Activated CD4-positive, alpha-beta T cell treated with anti-CD3 and anti-CD28 coated beads for 36 hours (primary cell): ENCODE measurements at regions of chr6 and their contacts with region 1.

Region 1: GRCh38 chr6:37653933-37654565 is 43.6 kb downstream of the MDGA1 start:
- DNase-seq: peak; percentile 77
- ATAC-seq: peak; percentile 71
- H3K4me3 Mint-ChIP-seq: no peak overlapping the region
- H3K27ac Mint-ChIP-seq: no peak overlapping the region
- H3K4me1 Mint-ChIP-seq: peaks cover 11% of the 10 kb centered on the region
- H3K27me3 Mint-ChIP-seq: peaks cover 13% of the 10 kb centered on the region

Region 2: DNA sequence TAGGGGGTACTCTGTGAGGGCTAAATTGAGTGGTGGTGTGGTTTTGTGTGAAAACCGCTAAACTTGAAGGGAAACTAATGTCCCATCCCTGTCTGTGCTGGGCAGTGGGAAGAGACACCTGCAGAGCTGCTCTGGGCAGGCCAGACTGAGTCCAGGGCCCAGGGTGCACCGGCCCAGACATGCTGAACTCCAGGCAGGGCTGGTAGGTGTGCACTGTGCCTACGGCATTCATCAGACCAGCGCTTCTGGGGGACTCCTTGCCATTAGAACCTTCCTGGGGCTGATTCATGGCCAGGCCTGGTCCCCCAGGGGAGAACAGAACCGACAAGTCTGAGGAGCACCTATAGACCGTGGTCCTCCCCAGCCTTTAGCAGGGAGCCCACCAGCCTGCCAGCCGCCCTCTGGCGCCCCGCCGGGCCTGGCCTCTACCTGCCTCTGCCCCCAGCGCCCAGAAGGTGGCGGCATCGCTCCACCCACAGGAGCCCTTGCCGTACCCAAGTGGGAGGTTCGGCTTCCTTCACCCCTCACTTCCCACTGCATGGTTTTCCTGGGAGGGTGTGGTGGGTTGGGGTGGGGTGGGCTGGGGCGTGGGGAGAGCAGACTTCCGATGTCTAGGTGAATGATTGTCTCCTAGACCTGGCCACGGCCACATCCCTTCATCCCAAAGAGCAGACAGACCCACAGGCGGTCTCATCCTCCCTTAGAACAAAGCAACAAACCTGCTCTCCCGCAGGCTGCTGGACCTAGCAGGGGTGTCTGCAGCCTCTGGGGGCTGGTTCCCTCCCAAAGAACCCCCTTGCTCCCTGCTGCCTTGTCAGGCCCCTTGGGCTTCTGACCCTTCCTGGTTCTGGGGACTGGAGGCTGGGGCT is 169.9 kb before region 1 on chr6:
- CTCF ChIA-PET with region 1: interaction called, 11 read pairs
- POLR2A ChIA-PET with region 1: no interaction called
- intact Hi-C with region 1: loop called in 1 of 2 experiments (anchors 1 kb)
- DNase-seq: peak; percentile 86
- ATAC-seq: peak; percentile 61
- H3K4me3 Mint-ChIP-seq: no peak overlapping the region
- H3K27ac Mint-ChIP-seq: no peak overlapping the region
- H3K4me1 Mint-ChIP-seq: peaks cover 15% of the 10 kb centered on the region
- H3K27me3 Mint-ChIP-seq: no peaks in the 10 kb centered on the region

Region 3: DNA sequence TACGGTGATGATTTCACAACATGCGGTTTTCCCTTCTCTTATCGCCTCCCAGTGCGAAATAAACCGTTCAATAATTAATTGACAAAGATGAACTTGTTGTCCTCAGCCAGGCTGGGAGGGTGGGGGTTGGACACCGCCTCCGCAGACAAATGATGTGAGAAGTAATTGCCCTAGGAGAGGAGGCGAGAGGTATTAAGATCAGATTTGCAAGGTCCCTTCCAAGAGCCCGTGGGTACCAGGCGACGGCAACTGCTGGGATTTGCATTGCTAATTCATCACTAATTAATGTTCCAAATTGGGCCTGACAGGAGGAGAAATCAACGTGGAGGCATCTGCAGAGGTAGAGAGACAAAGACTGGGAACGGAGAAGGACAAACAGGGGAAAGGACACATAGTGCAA is 64.1 kb before region 1 on chr6:
- CTCF ChIA-PET with region 1: no interaction called
- POLR2A ChIA-PET with region 1: no interaction called
- intact Hi-C with region 1: no loop called
- DNase-seq: no peak
- ATAC-seq: no peak
- H3K4me3 Mint-ChIP-seq: no peak overlapping the region
- H3K27ac Mint-ChIP-seq: no peak overlapping the region
- H3K4me1 Mint-ChIP-seq: no peaks in the 10 kb centered on the region
- H3K27me3 Mint-ChIP-seq: no peaks in the 10 kb centered on the region

Region 4: GRCh38 chr6:37673436-37673835 is 19.4 kb after region 1 on chr6:
- CTCF ChIA-PET with region 1: interaction called, 10 read pairs
- POLR2A ChIA-PET with region 1: no interaction called
- intact Hi-C with region 1: no loop called
- DNase-seq: no peak
- ATAC-seq: no peak
- H3K4me3 Mint-ChIP-seq: no peak overlapping the region
- H3K27ac Mint-ChIP-seq: no peak overlapping the region
- H3K4me1 Mint-ChIP-seq: no peaks in the 10 kb centered on the region
- H3K27me3 Mint-ChIP-seq: no peaks in the 10 kb centered on the region